ENCODE measurements at regions of chr14 and their contacts with region 1.

Region 1: DNA sequence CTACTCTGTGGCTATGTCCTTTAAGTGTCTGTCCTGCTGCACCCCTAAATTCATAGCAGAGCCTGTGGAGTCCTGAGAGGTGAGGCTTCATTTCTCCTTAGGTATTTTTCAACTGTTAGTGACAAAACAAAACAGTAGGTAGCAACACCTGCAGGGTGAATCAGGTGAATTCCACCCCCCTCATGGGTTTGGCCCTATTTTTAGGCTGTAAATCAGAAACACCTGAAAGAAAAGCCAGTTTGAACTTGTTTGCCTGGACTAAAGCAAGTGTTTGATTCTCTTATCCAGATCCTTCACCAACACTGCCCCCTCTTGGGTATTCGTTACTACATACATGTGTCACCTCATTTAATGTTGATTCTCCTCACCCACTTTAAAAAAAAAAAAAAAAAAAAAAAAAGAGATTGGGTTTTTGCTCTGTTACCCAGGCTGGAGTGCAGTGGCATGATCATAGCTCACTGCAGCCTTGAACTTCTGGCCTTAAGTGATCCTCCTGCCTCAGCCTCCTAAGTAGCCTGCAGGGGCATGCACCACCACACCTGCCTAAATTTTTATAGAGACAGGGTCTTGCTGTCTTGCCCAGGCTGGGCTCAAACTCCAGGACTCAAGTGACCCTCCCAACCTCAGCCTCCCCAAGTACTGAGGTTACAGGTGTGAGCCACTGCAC is 10.3 kb downstream of the TBPL2 start:
- DNase-seq: peak; percentile 97
- ATAC-seq: peak; percentile 58
- H3K4me3 ChIP-seq: no peak overlapping the region
- H3K27ac ChIP-seq: peak overlapping the region; percentile 13
- H3K4me1 ChIP-seq: peaks cover 51% of the 10 kb centered on the region
- H3K27me3 ChIP-seq: no peaks in the 10 kb centered on the region
- CTCF ChIP-seq: peak; percentile 89

Region 2: DNA sequence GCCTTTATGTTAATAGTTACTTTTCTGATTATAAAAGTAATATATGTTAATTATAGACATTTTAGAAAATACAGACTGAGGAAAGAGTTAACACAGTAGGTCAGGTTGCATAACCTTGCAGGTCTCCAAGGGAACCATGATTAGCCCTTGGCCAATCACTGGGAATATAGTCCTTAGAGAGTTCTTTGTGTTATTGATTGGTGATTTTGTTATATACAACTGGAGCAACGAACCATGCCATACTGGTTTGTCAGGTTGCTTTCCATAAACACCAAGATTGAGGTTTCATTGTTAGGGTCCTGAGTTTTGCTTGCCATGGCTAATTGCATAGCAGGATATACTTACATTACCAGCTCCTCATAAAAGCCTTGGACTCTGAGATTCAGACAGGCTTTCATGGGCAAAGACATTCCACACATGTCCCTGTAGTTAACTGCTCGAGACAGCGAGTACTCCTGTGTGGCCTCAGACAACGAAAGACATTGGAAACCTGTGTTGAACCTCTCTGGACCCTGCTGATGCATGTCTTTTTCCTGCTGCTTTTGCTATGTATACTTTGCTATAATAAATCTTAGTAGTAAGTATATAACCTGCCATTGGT is 345.0 kb before region 1 on chr14:
- CTCF ChIA-PET with region 1: no interaction called
- POLR2A ChIA-PET with region 1: no interaction called
- intact Hi-C with region 1: loop called (anchors 5 kb)
- DNase-seq: no peak
- ATAC-seq: no peak
- H3K4me3 ChIP-seq: no peak overlapping the region
- H3K27ac ChIP-seq: no peak overlapping the region
- H3K4me1 ChIP-seq: peaks cover 3% of the 10 kb centered on the region; the same call in 1 of the 2 replicates
- H3K27me3 ChIP-seq: no peaks in the 10 kb centered on the region
- CTCF ChIP-seq: no peak

Region 3: DNA sequence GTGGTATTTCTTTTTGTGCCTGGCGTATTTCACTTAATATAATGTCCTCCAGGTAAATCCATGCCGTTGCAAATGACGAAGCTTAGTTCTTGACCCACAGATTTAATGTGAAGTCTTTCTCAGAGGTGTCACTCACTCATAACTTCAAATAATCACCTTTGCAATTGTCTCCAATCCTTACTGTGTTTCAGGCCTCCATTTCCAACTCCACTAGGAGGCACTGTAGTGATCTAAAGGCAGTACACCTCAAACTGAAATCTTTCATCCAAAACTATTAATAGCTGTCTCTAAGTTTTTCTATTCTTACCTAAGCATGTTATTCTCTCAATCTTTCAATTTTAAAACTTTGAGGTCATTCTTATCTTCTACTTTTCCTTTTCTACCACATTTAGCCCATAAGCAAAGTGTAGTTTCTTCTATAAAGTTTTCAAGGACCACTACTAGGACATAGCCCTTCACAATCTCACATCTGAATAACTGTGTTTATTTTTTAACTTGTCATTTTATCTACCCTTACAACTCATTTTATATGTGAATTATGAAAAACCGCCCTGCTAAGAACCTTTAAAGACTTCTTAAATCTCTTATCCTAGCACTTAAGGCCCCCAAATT is 184.4 kb before region 1 on chr14:
- CTCF ChIA-PET with region 1: interaction called, 6 read pairs
- POLR2A ChIA-PET with region 1: no interaction called
- intact Hi-C with region 1: loop called (anchors 1 kb)
- DNase-seq: peak; percentile 76
- ATAC-seq: peak; percentile 84
- H3K4me3 ChIP-seq: no peak overlapping the region
- H3K27ac ChIP-seq: no peak overlapping the region
- H3K4me1 ChIP-seq: no peaks in the 10 kb centered on the region
- H3K27me3 ChIP-seq: 0 out of 2 replicates have a peak, but pooled peaks cover 3% of the 10 kb centered on the region
- CTCF ChIP-seq: peak; percentile 98

Region 4: DNA sequence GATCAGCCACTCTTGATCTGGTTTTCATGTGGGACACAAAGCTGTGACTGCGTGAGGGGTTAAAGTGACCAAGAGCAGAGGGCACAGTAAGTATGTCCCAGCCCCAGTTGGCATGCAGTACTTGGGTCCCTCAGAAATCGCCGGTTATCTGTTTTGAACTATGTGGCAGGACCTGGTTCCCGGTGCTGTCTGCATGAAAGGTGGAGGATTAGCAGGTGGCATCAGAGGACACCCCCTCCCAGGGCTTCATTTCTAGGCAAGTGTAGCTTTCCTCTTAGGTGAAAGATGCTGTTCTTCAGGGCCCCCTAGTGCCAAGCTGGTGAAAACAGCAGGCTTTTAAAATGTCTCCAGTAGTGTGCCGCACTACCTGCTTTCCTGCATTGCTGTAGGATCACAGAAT is 75.7 kb before region 1 on chr14:
- CTCF ChIA-PET with region 1: no interaction called
- POLR2A ChIA-PET with region 1: no interaction called
- intact Hi-C with region 1: loop called (anchors 1 kb)
- DNase-seq: peak; percentile 63
- ATAC-seq: peak; percentile 43
- H3K4me3 ChIP-seq: no peak overlapping the region
- H3K27ac ChIP-seq: peak overlapping the region; percentile 86
- H3K4me1 ChIP-seq: peaks cover 61% of the 10 kb centered on the region
- H3K27me3 ChIP-seq: no peaks in the 10 kb centered on the region
- CTCF ChIP-seq: peak; percentile 86

Region 5: GRCh38 chr14:55398679-55399078 is 31.5 kb before region 1 on chr14:
- CTCF ChIA-PET with region 1: no interaction called
- POLR2A ChIA-PET with region 1: no interaction called
- intact Hi-C with region 1: loop called (anchors 2 kb)
- DNase-seq: peak; percentile 99
- ATAC-seq: peak; percentile 94
- H3K4me3 ChIP-seq: no peak overlapping the region
- H3K27ac ChIP-seq: peak overlapping the region; percentile 31
- H3K4me1 ChIP-seq: peaks cover 23% of the 10 kb centered on the region
- H3K27me3 ChIP-seq: no peaks in the 10 kb centered on the region
- CTCF ChIP-seq: no peak

Region 6: GRCh38 chr14:55416866-55417265 is 13.3 kb before region 1 on chr14:
- CTCF ChIA-PET with region 1: interaction called, 13 read pairs
- POLR2A ChIA-PET with region 1: no interaction called
- intact Hi-C with region 1: loop called (anchors 1 kb)
- DNase-seq: peak; percentile 82
- ATAC-seq: peak; percentile 48
- H3K4me3 ChIP-seq: no peak overlapping the region
- H3K27ac ChIP-seq: no peak overlapping the region
- H3K4me1 ChIP-seq: peaks cover 19% of the 10 kb centered on the region
- H3K27me3 ChIP-seq: no peaks in the 10 kb centered on the region
- CTCF ChIP-seq: peak; percentile 100

Region 7: DNA sequence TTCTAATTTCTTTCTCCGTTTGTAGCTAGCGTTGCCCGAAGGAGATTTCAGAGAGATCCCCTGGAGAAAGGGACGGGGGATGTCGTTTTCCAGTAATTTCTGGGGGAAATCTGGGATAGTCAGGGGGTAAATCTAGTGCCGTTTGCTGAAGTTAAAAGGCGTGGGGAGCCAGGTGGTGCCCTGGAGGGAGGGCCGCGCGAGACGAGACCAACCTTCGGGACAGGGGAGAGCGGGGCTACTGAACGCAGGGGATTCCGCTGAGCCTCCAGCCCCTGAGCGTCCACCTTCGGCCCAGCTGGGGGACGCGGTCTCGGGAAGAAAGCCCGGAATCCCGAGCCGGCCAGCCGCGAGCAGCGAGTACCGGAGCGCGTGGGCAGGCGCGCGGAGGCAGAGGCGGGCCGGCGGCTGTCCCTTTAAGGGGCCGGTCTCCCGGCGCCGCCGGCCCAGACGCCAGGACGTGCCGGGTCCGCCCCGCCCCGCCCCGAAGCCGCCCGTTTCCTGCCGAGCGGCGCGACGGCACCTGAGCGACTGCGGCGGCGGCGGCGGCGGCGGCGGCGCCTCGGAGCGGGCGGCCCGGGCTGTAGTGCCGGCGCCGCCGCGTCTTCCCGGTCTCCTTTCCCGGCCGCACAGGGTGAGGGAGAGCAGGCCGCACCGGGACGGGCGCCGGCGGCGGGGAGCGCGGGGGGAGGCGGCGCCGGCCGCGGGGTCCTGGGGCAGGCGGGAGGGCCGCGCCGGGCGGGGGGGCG is 149.7 kb after region 1 on chr14 and contains the start of gene KTN1:
- CTCF ChIA-PET with region 1: no interaction called
- POLR2A ChIA-PET with region 1: interaction called, 18 read pairs
- intact Hi-C with region 1: no loop called
- DNase-seq: peak; percentile 97
- ATAC-seq: peak; percentile 85
- H3K4me3 ChIP-seq: peak within 1 kb of the TSS; percentile 82
- H3K27ac ChIP-seq: peak within 1 kb of the TSS; percentile 68
- H3K4me1 ChIP-seq: peaks cover 53% of the 10 kb centered on the region
- H3K27me3 ChIP-seq: no peaks in the 10 kb centered on the region
- CTCF ChIP-seq: no peak
- total RNA-seq, gene KTN1: 249 and 251 TPM in 2 replicates